Ovary (tissue), 10 donors: ENCODE measurements at regions of chr3 and their contacts with region 1.

Region 1: DNA sequence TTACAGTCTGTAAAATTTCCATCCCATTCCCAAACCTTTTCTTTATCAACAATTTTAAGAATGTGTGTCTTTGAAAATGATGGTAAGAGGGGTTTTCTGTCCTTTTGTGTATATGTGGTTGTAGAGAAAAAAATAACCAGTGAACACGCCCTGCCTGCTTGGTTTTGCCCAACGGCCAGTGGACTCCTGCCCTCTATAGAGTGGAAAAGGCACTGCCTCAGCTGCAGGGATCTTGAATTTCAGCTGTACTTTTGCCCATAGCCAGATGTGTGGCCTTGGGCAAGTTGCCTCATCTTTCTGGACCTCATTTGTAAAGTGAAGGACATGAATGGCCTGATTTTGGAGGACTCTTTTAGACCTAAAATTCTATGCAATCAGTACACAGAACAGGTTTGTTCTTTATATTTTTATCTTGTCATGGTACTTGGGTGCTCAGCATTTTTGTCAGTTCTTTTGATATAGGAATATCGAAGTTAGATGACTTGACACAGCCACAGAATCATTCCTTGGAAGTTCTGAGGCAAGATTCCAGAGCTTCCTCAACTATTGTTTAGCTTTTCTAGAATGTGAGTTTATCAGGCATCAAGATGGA is 81.0 kb downstream of the CLDN11 start:
- DNase-seq: peak; percentile 73 to 85 (median 82)
- H3K4me3 ChIP-seq: no peak overlapping the region
- H3K27ac ChIP-seq: peak overlapping the region in 1 of 2 donors; percentile 19
- H3K4me1 ChIP-seq: peaks cover 35% of the 10 kb centered on the region
- H3K27me3 ChIP-seq: no peaks in the 10 kb centered on the region
- CTCF ChIP-seq: peak; percentile 36 to 64 (median 59)
- EP300 ChIP-seq: no peak
- POLR2A ChIP-seq: no peak

Region 2: DNA sequence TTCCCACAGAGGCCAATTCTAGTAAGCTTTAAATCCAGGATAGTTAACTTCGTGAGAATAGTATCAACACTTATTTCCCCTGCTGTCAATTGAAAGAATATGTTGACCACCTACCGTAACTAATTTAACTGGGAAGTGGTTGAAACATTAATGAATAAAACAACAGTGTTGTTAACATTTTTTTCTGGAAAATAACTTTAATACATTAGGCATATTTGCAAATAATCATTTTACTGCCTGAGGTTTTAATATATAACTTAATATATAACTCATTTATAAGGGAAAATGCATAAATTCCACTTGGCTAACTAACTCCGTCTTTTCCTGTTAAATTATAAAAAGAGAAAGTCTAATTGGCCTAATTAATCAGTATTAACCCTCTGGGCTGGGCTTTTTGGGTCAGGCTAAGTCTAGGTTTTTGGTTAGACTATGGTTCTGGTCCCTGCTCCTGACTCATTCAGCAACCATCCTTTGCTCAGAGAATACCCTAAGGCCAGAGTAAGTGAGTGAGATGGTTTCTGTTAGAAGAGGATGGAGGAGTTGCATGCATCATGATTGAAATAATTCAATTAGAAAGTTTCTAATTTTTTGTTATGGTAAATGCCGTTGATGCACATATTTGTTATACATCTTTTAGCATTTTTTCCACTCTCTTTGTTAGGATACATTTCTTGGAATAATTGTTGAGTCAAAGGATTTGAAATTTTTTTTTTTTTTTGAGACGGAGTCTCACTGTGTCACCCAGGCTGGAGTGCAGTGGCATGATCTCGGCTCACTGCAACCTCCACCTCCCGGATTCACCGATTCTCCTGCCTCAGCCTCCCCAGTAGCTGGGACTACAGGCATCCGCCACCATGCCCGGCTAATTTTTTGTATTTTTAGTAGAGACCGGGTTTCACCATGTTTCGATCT is 152.9 kb before region 1 on chr3:
- intact Hi-C with region 1: loop called in 1 of 4 experiments (anchors 1 kb)
- DNase-seq: no peak
- H3K4me3 ChIP-seq: no peak overlapping the region
- H3K27ac ChIP-seq: no peak overlapping the region
- H3K4me1 ChIP-seq: peaks cover 2% of the 10 kb centered on the region
- H3K27me3 ChIP-seq: no peaks in the 10 kb centered on the region
- CTCF ChIP-seq: no peak
- EP300 ChIP-seq: no peak
- POLR2A ChIP-seq: no peak

Region 3: GRCh38 chr3:170419557-170420087 is 80.0 kb before region 1 on chr3:
- intact Hi-C with region 1: loop called in 3 of 4 experiments (anchors 5 kb)
- DNase-seq: peak; percentile 65 to 78 (median 69)
- H3K4me3 ChIP-seq: peak overlapping the region; percentile 53
- H3K27ac ChIP-seq: peak overlapping the region; percentile 77 to 91
- H3K4me1 ChIP-seq: peaks cover 15% of the 10 kb centered on the region
- H3K27me3 ChIP-seq: no peaks in the 10 kb centered on the region
- CTCF ChIP-seq: no peak
- EP300 ChIP-seq: no peak
- POLR2A ChIP-seq: peak; percentile 50

Region 4: GRCh38 chr3:170709046-170709445 is 209.4 kb after region 1 on chr3:
- intact Hi-C with region 1: no loop called
- DNase-seq: no peak
- H3K4me3 ChIP-seq: no peak overlapping the region
- H3K27ac ChIP-seq: no peak overlapping the region
- H3K4me1 ChIP-seq: no peaks in the 10 kb centered on the region
- H3K27me3 ChIP-seq: no peaks in the 10 kb centered on the region
- CTCF ChIP-seq: no peak
- EP300 ChIP-seq: no peak
- POLR2A ChIP-seq: no peak

Region 5: DNA sequence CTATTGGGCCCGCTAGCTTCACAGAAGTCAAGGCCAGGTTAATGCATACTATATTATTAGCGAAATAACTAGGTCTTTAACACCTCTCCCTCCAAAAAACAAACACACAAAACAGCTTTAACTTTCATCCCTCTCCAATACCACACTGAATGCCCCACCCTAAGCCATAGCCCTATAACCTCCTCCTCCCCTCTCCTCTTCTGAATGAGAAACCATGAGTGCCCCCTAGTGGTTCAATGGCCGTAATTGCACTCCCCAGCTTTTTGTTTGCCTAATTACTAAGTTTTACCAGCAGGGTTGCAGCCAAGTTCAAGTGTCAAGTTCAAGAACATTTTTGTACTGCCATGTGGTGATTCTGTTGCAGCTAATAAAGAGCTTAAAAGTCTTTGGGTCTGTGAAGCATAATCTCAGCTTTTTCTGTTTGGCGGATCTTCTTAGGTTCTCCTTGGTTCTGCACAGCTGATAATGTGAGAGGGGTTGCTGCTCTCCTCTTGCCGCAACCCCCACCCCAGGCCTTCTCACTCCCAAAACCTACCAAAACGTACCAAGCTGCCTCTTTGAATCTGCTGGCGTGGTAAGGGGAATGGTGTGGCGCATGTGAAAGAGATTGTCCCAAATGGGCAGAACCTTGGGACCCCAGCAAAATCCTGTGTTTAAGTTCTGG is 312.4 kb after region 1 on chr3:
- intact Hi-C with region 1: loop called in 2 of 4 experiments (anchors 5 to 10 kb)
- DNase-seq: peak; percentile 76 to 90 (median 80)
- H3K4me3 ChIP-seq: no peak overlapping the region
- H3K27ac ChIP-seq: peak overlapping the region in 1 of 2 donors; percentile 68
- H3K4me1 ChIP-seq: peaks cover 16% of the 10 kb centered on the region
- H3K27me3 ChIP-seq: no peaks in the 10 kb centered on the region
- CTCF ChIP-seq: peak; percentile 84 to 97 (median 94)
- EP300 ChIP-seq: no peak
- POLR2A ChIP-seq: no peak